Ovary (tissue), 10 donors: ENCODE measurements at regions of chr3 and their contacts with region 1.

Region 1: GRCh38 chr3:184371570-184372018 is 6.4 kb downstream of the THPO start:
- DNase-seq: peak; percentile 82 to 86 (median 83)
- H3K4me3 ChIP-seq: no peak overlapping the region
- H3K27ac ChIP-seq: no peak overlapping the region
- H3K4me1 ChIP-seq: peaks cover 2% of the 10 kb centered on the region
- H3K27me3 ChIP-seq: no peaks in the 10 kb centered on the region
- CTCF ChIP-seq: peak; percentile 87 to 89 (median 88)
- EP300 ChIP-seq: no peak
- POLR2A ChIP-seq: no peak

Region 2: GRCh38 chr3:184417619-184418327 is 46.2 kb after region 1 on chr3:
- intact Hi-C with region 1: loop called in 2 of 4 experiments (anchors 5 kb)
- DNase-seq: peak; percentile 73 to 87 (median 81)
- H3K4me3 ChIP-seq: no peak overlapping the region
- H3K27ac ChIP-seq: no peak overlapping the region
- H3K4me1 ChIP-seq: peaks cover 3% of the 10 kb centered on the region
- H3K27me3 ChIP-seq: no peaks in the 10 kb centered on the region
- CTCF ChIP-seq: peak; percentile 72 to 87 (median 82)
- EP300 ChIP-seq: no peak
- POLR2A ChIP-seq: no peak

Region 3: GRCh38 chr3:184513276-184514170 is 141.9 kb after region 1 on chr3:
- intact Hi-C with region 1: loop called in 3 of 4 experiments (anchors 5 kb)
- DNase-seq: peak; percentile 84 to 93 (median 90)
- H3K4me3 ChIP-seq: peak overlapping the region; percentile 39
- H3K27ac ChIP-seq: no peak overlapping the region
- H3K4me1 ChIP-seq: peaks cover 2% of the 10 kb centered on the region
- H3K27me3 ChIP-seq: no peaks in the 10 kb centered on the region
- CTCF ChIP-seq: peak; percentile 73 to 88 (median 80)
- EP300 ChIP-seq: no peak
- POLR2A ChIP-seq: no peak

Region 4: GRCh38 chr3:184543843-184544512 is 172.4 kb after region 1 on chr3:
- intact Hi-C with region 1: loop called (anchors 5 to 10 kb)
- DNase-seq: peak; percentile 65 to 81 (median 79)
- H3K4me3 ChIP-seq: no peak overlapping the region
- H3K27ac ChIP-seq: no peak overlapping the region
- H3K4me1 ChIP-seq: peaks cover 1% of the 10 kb centered on the region
- H3K27me3 ChIP-seq: no peaks in the 10 kb centered on the region
- CTCF ChIP-seq: peak; percentile 77 to 93 (median 88)
- EP300 ChIP-seq: no peak
- POLR2A ChIP-seq: no peak

Region 5: GRCh38 chr3:184679056-184679816 is 307.6 kb after region 1 on chr3:
- intact Hi-C with region 1: no loop called
- DNase-seq: peak in 4 of 5 donors; percentile 56 to 75 (median 59)
- H3K4me3 ChIP-seq: no peak overlapping the region
- H3K27ac ChIP-seq: peak overlapping the region; percentile 58 to 63
- H3K4me1 ChIP-seq: peaks cover 18% of the 10 kb centered on the region
- H3K27me3 ChIP-seq: no peaks in the 10 kb centered on the region
- CTCF ChIP-seq: no peak
- EP300 ChIP-seq: no peak
- POLR2A ChIP-seq: no peak

Region 6: GRCh38 chr3:184765730-184766074 is 394.1 kb after region 1 on chr3:
- intact Hi-C with region 1: loop called in 1 of 4 experiments (anchors 10 kb)
- DNase-seq: no peak
- H3K4me3 ChIP-seq: no peak overlapping the region
- H3K27ac ChIP-seq: no peak overlapping the region
- H3K4me1 ChIP-seq: peaks cover 6% of the 10 kb centered on the region
- H3K27me3 ChIP-seq: no peaks in the 10 kb centered on the region
- CTCF ChIP-seq: no peak
- EP300 ChIP-seq: no peak
- POLR2A ChIP-seq: no peak